ENCODE measurements at regions of chr18 and their contacts with region 1.

Region 1: GRCh38 chr18:22348521-22349316 is 69.0 kb downstream of the CTAGE1 start:
- DNase-seq: peak; percentile 85
- H3K4me3 Mint-ChIP-seq: peak overlapping the region; percentile 85
- H3K27ac Mint-ChIP-seq: peak overlapping the region; percentile 92
- H3K4me1 Mint-ChIP-seq: peaks cover 51% of the 10 kb centered on the region
- H3K27me3 Mint-ChIP-seq: no peaks in the 10 kb centered on the region
- CTCF ChIP-seq: no peak

Region 2: GRCh38 chr18:22174341-22175145 is 174.2 kb before region 1 on chr18:
- CTCF ChIA-PET with region 1: interaction called, 3 read pairs
- intact Hi-C with region 1: loop called (anchors 5 kb)
- DNase-seq: no peak
- H3K4me3 Mint-ChIP-seq: peak overlapping the region; percentile 98
- H3K27ac Mint-ChIP-seq: peak overlapping the region; percentile 98
- H3K4me1 Mint-ChIP-seq: peaks cover 1% of the 10 kb centered on the region
- H3K27me3 Mint-ChIP-seq: no peaks in the 10 kb centered on the region
- CTCF ChIP-seq: no peak

Region 3: GRCh38 chr18:22194151-22194598 is 154.5 kb before region 1 on chr18:
- CTCF ChIA-PET with region 1: no interaction called
- intact Hi-C with region 1: loop called (anchors 5 kb)
- DNase-seq: peak; percentile 68
- H3K4me3 Mint-ChIP-seq: peak overlapping the region; percentile 64
- H3K27ac Mint-ChIP-seq: peak overlapping the region; percentile 94
- H3K4me1 Mint-ChIP-seq: peaks cover 86% of the 10 kb centered on the region
- H3K27me3 Mint-ChIP-seq: no peaks in the 10 kb centered on the region
- CTCF ChIP-seq: no peak

Region 4: GRCh38 chr18:22282311-22283112 is 66.2 kb before region 1 on chr18:
- CTCF ChIA-PET with region 1: interaction called, 13 read pairs
- intact Hi-C with region 1: loop called (anchors 1 kb)
- DNase-seq: peak; percentile 69
- H3K4me3 Mint-ChIP-seq: peak overlapping the region; percentile 41
- H3K27ac Mint-ChIP-seq: peak overlapping the region; percentile 98
- H3K4me1 Mint-ChIP-seq: peaks cover 70% of the 10 kb centered on the region
- H3K27me3 Mint-ChIP-seq: no peaks in the 10 kb centered on the region
- CTCF ChIP-seq: no peak

Region 5: DNA sequence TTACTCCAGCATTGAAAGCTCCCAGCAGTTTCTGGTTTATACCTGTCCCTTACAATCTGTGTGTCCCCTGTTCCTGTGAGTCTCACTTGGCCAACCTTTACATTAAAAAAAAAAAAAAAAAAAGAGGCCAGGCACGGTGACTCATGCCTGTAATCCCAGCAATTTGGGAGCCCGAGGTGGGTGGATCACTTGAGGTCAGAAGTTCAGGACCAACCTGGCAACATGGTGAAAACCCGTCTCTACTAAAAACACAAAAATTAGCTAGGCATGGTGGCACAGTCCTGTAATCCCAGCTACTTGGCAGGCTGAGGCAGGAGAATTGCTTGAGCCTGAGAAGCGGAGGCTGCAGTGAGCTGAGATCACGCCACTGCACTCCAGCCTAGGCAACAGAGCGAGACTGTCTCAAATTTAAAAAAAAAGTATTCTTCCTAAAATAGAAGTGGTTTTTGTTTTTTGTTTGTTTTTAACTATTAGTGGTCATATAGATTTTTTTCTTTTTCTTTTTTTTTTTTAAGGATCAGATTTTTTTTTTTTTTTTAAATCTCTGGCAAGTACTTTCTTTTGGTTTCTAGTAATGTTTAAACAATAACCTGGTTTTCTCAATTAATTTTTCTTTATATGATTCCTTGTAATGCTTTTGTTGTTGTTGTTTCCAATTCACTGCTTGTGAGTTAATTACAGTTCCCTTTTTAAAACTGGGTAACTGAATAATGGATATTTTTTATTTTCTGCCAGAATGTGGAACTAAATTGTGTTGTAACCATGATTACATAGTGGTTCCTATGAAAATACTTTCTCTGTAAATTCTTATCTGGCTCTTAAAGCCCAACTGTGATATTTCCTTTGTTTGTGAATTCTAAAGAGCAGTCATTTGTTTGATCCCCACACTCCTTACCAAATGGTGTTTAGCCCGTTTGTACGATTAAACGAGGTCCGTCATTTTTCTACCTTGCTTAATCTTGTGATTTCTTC is 47.8 kb before region 1 on chr18:
- CTCF ChIA-PET with region 1: no interaction called
- intact Hi-C with region 1: loop called (anchors 5 kb)
- DNase-seq: peak; percentile 65
- H3K4me3 Mint-ChIP-seq: no peak overlapping the region
- H3K27ac Mint-ChIP-seq: peak overlapping the region; percentile 76
- H3K4me1 Mint-ChIP-seq: peaks cover 30% of the 10 kb centered on the region
- H3K27me3 Mint-ChIP-seq: no peaks in the 10 kb centered on the region
- CTCF ChIP-seq: no peak

Region 6: DNA sequence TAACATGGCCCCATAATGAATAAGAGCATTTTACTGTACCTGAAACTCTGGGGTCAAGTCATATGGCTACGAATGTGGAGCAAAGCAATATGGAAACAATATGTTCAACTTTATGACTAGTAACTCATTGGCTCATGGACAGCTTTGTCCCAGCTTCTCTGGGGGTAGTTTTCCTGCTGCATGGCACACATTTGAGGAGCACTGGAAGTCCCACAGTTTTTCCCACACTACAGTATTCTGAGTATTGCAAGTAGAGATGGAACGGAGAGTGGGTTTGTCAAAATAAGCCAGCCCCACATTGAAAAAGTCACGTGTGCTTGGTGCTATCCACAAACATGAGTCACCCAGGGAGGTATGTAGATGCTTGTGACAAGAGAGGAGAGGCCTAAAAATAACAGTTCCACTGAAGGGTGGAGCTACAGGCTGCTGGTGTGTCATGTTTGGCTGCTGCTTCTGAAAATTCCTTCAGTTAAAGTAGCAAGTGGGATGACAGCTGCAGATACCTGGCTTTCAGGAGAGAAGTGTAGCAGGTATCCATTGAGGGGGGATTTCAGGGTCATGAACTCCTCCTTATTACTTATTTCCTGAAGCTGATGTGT is 117.2 kb after region 1 on chr18:
- CTCF ChIA-PET with region 1: interaction called, 7 read pairs
- intact Hi-C with region 1: loop called (anchors 5 kb)
- DNase-seq: peak; percentile 70
- H3K4me3 Mint-ChIP-seq: peak overlapping the region; percentile 64
- H3K27ac Mint-ChIP-seq: peak overlapping the region; percentile 100
- H3K4me1 Mint-ChIP-seq: peaks cover 70% of the 10 kb centered on the region
- H3K27me3 Mint-ChIP-seq: no peaks in the 10 kb centered on the region
- CTCF ChIP-seq: no peak

Region 7: DNA sequence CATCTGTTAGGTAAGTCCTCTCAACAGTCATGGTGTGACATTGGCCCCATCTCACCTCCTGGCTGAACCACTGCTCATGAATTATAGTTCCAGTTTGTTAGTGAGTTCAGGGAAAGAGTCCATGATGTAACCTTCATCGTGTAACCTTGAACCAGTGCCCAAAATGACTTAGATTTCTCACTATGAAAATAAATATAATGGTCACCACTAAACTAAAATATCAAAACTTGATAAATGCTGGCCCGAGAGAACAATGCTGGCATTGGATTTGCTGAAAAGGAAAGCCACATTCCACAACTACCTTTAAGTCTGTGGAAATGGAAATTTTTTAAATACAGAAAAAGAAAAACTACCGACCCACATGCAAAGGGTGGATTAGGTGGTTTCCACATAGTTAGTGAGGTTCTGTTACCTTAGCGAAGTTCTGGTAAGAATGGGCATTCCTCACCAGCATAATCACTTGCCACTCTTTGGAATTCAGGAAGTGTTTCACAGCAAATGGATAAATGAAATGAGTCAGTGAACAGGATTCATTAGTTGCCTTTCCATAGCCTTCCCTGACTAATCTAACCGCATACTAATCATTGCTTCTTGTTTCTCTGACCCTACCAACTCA is 202.9 kb after region 1 on chr18:
- CTCF ChIA-PET with region 1: no interaction called
- intact Hi-C with region 1: loop called (anchors 2 kb)
- DNase-seq: peak; percentile 55
- H3K4me3 Mint-ChIP-seq: no peak overlapping the region
- H3K27ac Mint-ChIP-seq: no peak overlapping the region
- H3K4me1 Mint-ChIP-seq: peaks cover 16% of the 10 kb centered on the region
- H3K27me3 Mint-ChIP-seq: no peaks in the 10 kb centered on the region
- CTCF ChIP-seq: no peak

Region 8: DNA sequence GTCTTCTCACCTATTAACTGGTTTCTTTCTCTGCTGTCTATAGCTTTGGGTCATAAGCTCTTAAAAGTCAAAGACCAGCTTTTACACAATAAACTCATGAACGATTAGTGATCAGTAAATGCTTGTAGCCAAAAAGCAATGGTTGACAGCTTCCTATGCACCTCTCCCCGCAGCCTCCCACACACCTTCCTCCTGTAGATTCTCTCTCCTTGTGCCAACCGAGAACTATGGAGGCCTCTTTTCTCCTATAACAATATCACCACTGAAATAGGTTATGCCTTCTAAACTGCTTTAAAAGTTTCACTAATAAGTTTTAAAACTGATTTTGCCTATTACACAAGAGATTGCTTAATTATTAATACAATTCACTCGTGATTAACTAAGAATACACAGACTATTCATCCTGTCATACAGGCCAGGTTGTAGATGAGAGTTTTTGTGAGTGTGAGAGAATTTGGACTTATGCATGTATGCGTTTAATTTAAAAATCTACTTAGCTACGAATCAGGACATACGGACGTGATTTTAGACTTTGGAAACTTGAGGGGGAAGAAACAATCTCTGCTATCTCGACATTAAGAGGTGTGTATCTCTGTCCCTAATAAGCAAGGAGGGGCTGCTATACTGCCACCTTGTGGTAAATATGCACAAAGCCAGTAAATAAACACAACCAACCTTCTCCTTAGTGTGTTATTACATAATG is 355.3 kb after region 1 on chr18:
- CTCF ChIA-PET with region 1: no interaction called
- intact Hi-C with region 1: no loop called
- DNase-seq: peak; percentile 43
- H3K4me3 Mint-ChIP-seq: no peak overlapping the region
- H3K27ac Mint-ChIP-seq: no peak overlapping the region
- H3K4me1 Mint-ChIP-seq: peaks cover 33% of the 10 kb centered on the region
- H3K27me3 Mint-ChIP-seq: no peaks in the 10 kb centered on the region
- CTCF ChIP-seq: peak; percentile 71